ENCODE measurements at regions of chr1 and their contacts with region 1.

Region 1: DNA sequence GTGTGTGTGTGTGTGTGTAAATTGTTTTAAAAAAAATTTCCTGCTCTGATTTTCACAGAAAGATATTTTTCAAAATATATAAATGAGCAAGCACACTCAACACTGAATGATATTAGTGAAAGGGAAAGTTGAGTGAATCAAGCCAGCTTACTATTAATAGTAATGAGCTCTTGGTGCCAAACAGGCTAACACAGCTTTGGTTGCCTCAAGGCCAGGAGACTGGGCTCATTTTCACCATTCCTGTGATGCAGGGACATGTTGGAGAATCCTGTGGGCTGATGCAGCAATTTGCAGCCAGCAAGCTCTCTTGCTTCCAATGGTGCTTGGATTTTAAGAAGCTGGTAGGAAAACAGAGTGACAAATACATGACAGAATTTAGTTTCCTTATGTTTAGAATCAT is 30.2 kb downstream of the PLA2G4A start:
- DNase-seq: no peak
- H3K4me3 ChIP-seq: no peak overlapping the region
- H3K27ac ChIP-seq: no peak overlapping the region
- H3K4me1 ChIP-seq: peaks cover 0 to 7% (median 1%) of the 10 kb centered on the region in 4 experiments
- H3K27me3 ChIP-seq: no peaks in the 10 kb centered on the region

Region 2: GRCh38 chr1:186872291-186872690 is 13.4 kb after region 1 on chr1:
- CTCF ChIA-PET with region 1: interaction called, 10 read pairs
- POLR2A ChIA-PET with region 1: interaction called, 6 read pairs
- DNase-seq: no peak
- H3K4me3 ChIP-seq: no peak overlapping the region
- H3K27ac ChIP-seq: no peak overlapping the region
- H3K4me1 ChIP-seq: peaks cover 0 to 11% (median 8%) of the 10 kb centered on the region in 4 experiments
- H3K27me3 ChIP-seq: no peaks in the 10 kb centered on the region

Region 3: GRCh38 chr1:186884251-186884650 is 25.3 kb after region 1 on chr1:
- CTCF ChIA-PET with region 1: no interaction called
- POLR2A ChIA-PET with region 1: no interaction called
- DNase-seq: no peak
- H3K4me3 ChIP-seq: no peak overlapping the region
- H3K27ac ChIP-seq: no peak overlapping the region
- H3K4me1 ChIP-seq: no peaks in the 10 kb centered on the region
- H3K27me3 ChIP-seq: no peaks in the 10 kb centered on the region